ENCODE measurements at regions of chr9 and their contacts with region 1.

Region 1: GRCh38 chr9:130128733-130129431 is 43.3 kb upstream of the NCS1 start:
- DNase-seq: peak; percentile 99
- ATAC-seq: peak; percentile 86
- H3K4me3 ChIP-seq: no peak overlapping the region
- H3K27ac ChIP-seq: peak overlapping the region; percentile 83
- H3K4me1 ChIP-seq: peaks cover 18% of the 10 kb centered on the region
- H3K27me3 ChIP-seq: no peaks in the 10 kb centered on the region
- CTCF ChIP-seq: no peak
- POLR2A ChIP-seq: peak; percentile 16; the same call in 1 of the 2 replicates
- RAD21 ChIP-seq: peak; percentile 33; the same call in 1 of the 2 replicates

Region 2: GRCh38 chr9:129981180-129981907 is 147.5 kb before region 1 on chr9:
- CTCF ChIA-PET with region 1: no interaction called
- POLR2A ChIA-PET with region 1: no interaction called
- dilution Hi-C with region 1: no loop called
- in situ Hi-C with region 1: no loop called
- intact Hi-C with region 1: no loop called
- DNase-seq: no peak
- ATAC-seq: no peak
- H3K4me3 ChIP-seq: no peak overlapping the region
- H3K27ac ChIP-seq: no peak overlapping the region
- H3K4me1 ChIP-seq: no peaks in the 10 kb centered on the region
- H3K27me3 ChIP-seq: no peaks in the 10 kb centered on the region
- CTCF ChIP-seq: no peak
- POLR2A ChIP-seq: no peak
- RAD21 ChIP-seq: no peak

Region 3: DNA sequence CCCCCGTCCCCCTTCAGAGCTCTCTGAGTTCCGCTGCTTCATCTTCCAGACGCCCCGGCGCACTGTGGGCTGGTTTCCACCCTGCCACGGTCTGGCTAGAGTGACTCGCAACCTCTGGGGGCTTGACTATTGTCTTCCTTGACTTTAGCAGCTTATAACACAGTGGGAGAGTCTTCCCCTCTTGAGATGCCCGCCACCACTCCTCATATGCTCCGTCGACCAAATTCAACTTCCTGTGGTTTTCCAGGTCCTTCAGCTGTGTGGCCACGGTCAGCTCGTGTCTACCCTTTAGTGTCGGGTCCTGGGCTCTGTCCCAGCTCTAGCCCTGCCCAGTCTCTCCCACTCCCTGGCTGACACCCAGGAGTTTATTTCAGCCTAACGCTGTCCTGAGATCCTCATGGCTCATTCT is 15.1 kb after region 1 on chr9:
- CTCF ChIA-PET with region 1: no interaction called
- POLR2A ChIA-PET with region 1: no interaction called
- dilution Hi-C with region 1: no loop called
- in situ Hi-C with region 1: no loop called
- intact Hi-C with region 1: no loop called
- DNase-seq: peak; percentile 42
- ATAC-seq: peak; percentile 64
- H3K4me3 ChIP-seq: no peak overlapping the region
- H3K27ac ChIP-seq: no peak overlapping the region
- H3K4me1 ChIP-seq: peaks cover 10% of the 10 kb centered on the region
- H3K27me3 ChIP-seq: no peaks in the 10 kb centered on the region
- CTCF ChIP-seq: no peak
- POLR2A ChIP-seq: no peak
- RAD21 ChIP-seq: no peak

Region 4: DNA sequence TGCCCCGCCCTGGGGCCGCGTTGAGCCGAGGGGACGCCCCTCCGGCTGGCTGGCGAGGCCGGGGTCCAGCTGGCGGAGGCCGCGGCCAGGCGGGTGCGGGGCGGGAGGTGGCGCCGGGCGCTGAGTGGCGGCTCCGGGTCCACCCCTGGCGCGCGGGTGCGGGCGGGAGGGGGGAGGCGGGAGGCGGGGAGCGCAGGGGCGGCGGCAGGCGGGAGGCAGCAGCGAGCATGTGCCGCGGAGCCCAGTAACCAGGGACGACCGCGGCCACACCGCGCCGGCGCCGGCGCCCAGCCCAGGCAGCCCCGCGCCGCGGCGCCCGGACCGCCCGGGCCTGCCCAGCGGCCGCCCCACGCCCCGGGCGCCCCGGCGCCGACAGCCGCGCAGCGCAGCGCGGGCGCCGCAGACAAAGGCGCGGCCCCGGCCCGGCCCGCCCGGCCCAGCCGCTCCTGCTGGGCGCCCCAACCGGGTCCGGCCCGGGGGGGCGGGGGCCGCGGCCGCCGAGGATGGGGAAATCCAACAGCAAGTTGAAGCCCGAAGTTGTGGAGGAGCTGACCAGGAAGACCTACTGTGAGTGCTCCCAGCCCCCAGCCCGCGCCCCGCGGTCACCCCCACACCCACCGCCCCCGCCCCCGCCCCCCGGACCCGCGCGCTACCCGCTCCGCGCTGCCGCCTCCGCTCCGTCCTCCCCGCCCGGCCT is 43.4 kb after region 1 on chr9 and contains the start of gene NCS1:
- CTCF ChIA-PET with region 1: no interaction called
- POLR2A ChIA-PET with region 1: no interaction called
- dilution Hi-C with region 1: no loop called
- in situ Hi-C with region 1: no loop called
- intact Hi-C with region 1: loop called (anchors 1 kb)
- DNase-seq: peak; percentile 61
- ATAC-seq: peak; percentile 89
- H3K4me3 ChIP-seq: peak within 1 kb of the TSS; percentile 71
- H3K27ac ChIP-seq: peak within 1 kb of the TSS; percentile 70
- H3K4me1 ChIP-seq: peaks cover 10% of the 10 kb centered on the region
- H3K27me3 ChIP-seq: no peaks in the 10 kb centered on the region
- CTCF ChIP-seq: no peak
- POLR2A ChIP-seq: no peak
- RAD21 ChIP-seq: no peak
- total RNA-seq, gene NCS1: 35.8 and 41.0 TPM in 2 replicates

Measured in IMR-90 (cell line).